ENCODE measurements at regions of chr2 and their contacts with region 1.

Region 1: DNA sequence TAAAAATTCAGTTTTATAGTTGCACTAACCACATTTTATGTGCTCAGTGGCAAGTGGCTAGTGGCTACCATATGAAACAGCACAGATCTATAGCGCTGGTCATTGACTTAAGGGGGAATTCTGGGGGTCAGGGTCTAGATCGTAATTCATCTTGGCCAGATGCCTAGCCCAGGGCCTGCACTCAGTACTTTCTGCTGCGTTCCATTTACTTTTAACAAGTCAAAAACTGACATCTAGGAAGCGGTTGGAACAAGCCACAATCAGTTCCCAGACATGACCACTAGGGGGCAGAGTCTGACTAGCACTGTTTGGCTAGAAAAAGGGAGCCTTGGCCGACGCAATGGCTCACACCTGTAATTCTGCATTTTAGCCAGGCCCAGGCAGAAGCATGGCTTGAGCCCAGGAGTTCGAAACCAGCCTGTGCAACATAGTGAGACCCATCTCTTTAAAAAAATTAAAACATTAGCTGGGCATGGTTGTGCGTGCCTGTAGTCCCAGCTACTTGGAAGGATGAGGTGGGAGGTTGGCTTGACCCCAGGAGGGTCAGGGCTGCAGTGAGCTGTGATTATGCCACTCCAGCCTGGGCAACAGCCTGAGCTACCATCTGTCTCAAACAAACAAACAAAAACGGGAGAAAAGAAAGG is 9.0 kb upstream of the TMBIM1 start:
- DNase-seq: peak; percentile 90
- H3K4me3 Mint-ChIP-seq: no peak overlapping the region
- H3K27ac Mint-ChIP-seq: no peak overlapping the region
- H3K4me1 Mint-ChIP-seq: peaks cover 16% of the 10 kb centered on the region
- H3K27me3 Mint-ChIP-seq: no peaks in the 10 kb centered on the region
- CTCF ChIP-seq: peak; percentile 91

Region 2: GRCh38 chr2:218286570-218287459 is 14.5 kb before region 1 on chr2:
- CTCF ChIA-PET with region 1: interaction called, 24 read pairs
- POLR2A ChIA-PET with region 1: interaction called, 28 read pairs
- intact Hi-C with region 1: no loop called
- DNase-seq: peak; percentile 97
- H3K4me3 Mint-ChIP-seq: peak overlapping the region; percentile 80
- H3K27ac Mint-ChIP-seq: peak overlapping the region; percentile 99
- H3K4me1 Mint-ChIP-seq: peaks cover 57% of the 10 kb centered on the region
- H3K27me3 Mint-ChIP-seq: no peaks in the 10 kb centered on the region
- CTCF ChIP-seq: no peak

Region 3: DNA sequence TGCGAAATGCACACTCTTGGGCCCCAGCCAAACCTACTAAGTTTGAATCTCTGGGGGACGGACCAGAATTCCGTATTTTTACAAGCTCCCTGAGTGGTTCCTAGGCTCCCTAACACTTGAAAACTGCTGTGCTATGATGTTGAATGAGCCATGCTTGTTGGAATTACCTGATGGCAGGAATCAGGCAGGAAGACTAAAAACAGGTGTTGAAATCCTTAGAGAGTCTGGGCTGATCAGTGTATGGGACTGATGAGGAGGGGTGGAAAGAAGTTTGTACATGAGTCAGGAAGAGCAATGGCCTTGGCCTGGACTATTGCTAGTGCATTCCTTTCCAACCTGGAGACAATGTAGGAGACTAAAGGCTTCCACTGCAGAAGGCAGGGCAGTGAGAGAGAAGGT is 15.9 kb after region 1 on chr2:
- CTCF ChIA-PET with region 1: interaction called, 14 read pairs
- POLR2A ChIA-PET with region 1: no interaction called
- intact Hi-C with region 1: no loop called
- DNase-seq: no peak
- H3K4me3 Mint-ChIP-seq: no peak overlapping the region
- H3K27ac Mint-ChIP-seq: no peak overlapping the region
- H3K4me1 Mint-ChIP-seq: peaks cover 14% of the 10 kb centered on the region
- H3K27me3 Mint-ChIP-seq: no peaks in the 10 kb centered on the region
- CTCF ChIP-seq: no peak

Region 4: GRCh38 chr2:218466016-218466521 is 164.8 kb after region 1 on chr2:
- CTCF ChIA-PET with region 1: interaction called, 5 read pairs
- POLR2A ChIA-PET with region 1: no interaction called
- intact Hi-C with region 1: loop called (anchors 2 kb)
- DNase-seq: peak; percentile 27
- H3K4me3 Mint-ChIP-seq: no peak overlapping the region
- H3K27ac Mint-ChIP-seq: no peak overlapping the region
- H3K4me1 Mint-ChIP-seq: no peaks in the 10 kb centered on the region
- H3K27me3 Mint-ChIP-seq: no peaks in the 10 kb centered on the region
- CTCF ChIP-seq: peak; percentile 41

Measured in MCF 10A (cell line).